ENCODE measurements at regions of chr5 and their contacts with region 1.

Region 1: DNA sequence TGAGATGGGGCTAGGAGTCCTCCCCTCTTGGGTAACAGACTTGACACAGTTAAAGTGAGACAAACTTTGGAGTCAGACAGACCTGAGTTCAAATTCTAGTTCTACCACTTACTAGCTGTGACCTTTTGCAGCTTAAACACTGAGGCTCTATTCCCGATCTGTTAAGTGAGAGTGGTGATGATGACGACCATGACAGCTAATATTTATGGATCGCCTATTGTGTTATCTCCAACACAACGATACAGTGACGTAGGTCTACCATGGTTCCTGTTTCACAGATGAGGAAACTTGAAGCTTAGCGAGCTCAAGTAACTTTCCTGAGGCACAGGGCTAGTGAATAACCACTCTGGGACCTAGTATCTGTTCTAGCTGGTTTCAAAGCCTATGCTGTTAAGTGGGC is 110.3 kb upstream of the GABRP start:
- DNase-seq: no peak
- ATAC-seq: no peak
- H3K4me3 ChIP-seq: no peak overlapping the region
- H3K27ac ChIP-seq: no peak overlapping the region
- H3K4me1 ChIP-seq: no peaks in the 10 kb centered on the region
- H3K27me3 ChIP-seq: peaks cover 0 to 17% (median 0%) of the 10 kb centered on the region in 7 donors
- CTCF ChIP-seq: no peak

Region 2: GRCh38 chr5:170145462-170145861 is 527.7 kb before region 1 on chr5:
- intact Hi-C with region 1: no loop called
- DNase-seq: no peak
- ATAC-seq: no peak
- H3K4me3 ChIP-seq: no peak overlapping the region
- H3K27ac ChIP-seq: no peak overlapping the region
- H3K4me1 ChIP-seq: no peaks in the 10 kb centered on the region
- H3K27me3 ChIP-seq: no peaks in the 10 kb centered on the region
- CTCF ChIP-seq: no peak

Region 3: DNA sequence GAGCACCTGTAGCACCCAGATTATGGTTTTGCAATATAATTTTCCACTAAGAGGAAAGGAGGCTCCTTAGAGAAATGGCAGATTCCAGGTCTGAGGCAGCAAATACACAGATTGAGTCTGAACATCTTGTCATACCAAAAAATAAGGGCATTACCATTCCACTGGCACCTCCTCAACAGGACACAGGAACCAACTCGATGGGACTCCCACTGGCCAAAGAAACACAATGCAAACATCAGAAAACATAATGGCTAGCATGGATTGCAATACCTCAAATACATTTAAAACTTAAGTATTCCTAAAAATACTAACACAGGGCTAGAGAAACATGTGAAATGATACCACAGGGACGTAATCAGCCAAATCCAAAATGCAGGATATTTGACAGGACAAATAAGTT is 176.2 kb after region 1 on chr5:
- intact Hi-C with region 1: no loop called
- DNase-seq: no peak
- ATAC-seq: no peak
- H3K4me3 ChIP-seq: no peak overlapping the region
- H3K27ac ChIP-seq: no peak overlapping the region
- H3K4me1 ChIP-seq: no peaks in the 10 kb centered on the region
- H3K27me3 ChIP-seq: peaks cover 0 to 3% (median 0%) of the 10 kb centered on the region in 7 donors
- CTCF ChIP-seq: no peak

Region 4: DNA sequence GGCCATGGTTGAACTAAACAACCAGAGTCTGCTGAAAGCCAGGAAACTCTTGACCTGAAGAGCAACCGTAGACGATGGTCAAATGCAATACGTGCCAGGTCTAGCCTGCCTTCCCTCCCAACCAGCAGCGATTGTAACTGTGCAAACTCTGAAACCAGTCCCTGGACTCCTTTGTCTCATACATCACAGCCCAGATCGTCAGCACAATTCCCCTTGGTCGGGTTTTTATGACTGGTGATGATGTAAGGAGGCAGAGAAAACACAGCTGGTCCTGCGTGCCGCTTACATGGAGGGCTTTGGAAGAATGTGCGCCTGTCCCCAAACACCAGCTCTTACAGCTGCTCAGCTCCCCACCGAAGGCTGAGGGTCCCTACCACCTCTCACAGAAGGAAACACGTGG is 1137.0 kb after region 1 on chr5:
- intact Hi-C with region 1: loop called in 1 of 10 experiments (anchors 5 kb)
- DNase-seq: no peak
- ATAC-seq: peak in 1 of 8 donors; percentile 68
- H3K4me3 ChIP-seq: no peak overlapping the region
- H3K27ac ChIP-seq: no peak overlapping the region
- H3K4me1 ChIP-seq: no peaks in the 10 kb centered on the region
- H3K27me3 ChIP-seq: peaks cover 0 to 30% (median 18%) of the 10 kb centered on the region in 7 donors
- CTCF ChIP-seq: no peak